ENCODE measurements at regions of chr6 and their contacts with region 1.

Region 1: DNA sequence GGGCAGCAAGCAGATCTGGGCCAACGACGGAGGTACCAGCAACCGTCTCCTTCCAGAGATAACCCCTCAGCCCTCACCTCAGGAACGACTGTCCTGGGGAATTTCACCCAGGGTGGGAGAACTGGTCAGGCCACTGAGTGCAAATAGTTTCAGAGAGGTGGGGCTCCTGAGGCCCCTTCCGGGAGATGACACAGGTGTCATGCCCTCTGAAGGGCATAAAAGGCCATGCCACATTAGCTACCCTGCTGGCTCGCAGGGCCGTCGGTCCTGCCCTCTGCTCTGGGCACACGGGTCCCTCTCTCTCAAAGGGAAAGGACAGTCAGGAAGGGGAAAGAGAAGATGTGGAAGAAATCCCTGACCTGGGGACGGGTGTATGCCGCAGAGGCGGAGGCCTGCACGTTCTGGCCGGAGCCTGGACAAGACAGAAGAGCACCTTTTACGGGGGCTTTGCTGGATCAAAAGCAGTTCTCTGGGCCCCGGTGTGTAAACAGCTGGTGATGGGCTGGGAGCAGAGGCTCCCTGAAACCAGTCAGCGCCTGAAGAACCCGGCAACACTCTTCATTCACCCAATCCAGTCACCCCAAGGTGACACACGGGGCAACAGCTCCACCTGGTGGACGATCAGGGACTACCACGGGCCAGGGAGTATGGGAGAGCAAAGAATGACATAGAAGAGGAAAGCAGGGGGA is 6.4 kb upstream of the TAF8 start:
- DNase-seq: peak; percentile 90
- H3K4me3 ChIP-seq: no peak overlapping the region
- H3K27ac ChIP-seq: no peak overlapping the region
- H3K4me1 ChIP-seq: peaks cover 32% of the 10 kb centered on the region
- H3K27me3 ChIP-seq: no peaks in the 10 kb centered on the region
- CTCF ChIP-seq: peak; percentile 95

Region 2: DNA sequence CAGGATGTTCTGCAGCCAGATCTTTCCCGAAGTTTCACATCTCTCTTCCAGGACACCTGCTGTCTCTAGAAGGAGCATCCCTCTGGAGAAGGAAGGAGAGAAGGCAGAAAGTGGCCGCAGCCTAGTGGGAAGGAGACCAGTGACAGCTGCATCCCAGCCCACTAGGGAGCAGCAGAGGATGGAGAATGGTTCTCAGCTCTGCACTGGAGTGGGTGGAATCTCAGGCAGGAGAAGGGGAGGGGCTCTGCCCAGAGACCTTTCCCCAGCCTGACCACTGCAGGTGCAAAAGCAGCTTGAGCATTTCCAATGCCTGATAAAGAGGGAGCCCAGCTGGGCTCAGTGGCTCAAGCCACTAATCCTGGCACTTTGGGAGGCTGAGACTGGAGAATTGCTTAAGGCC is 676.2 kb before region 1 on chr6:
- CTCF ChIA-PET with region 1: no interaction called
- POLR2A ChIA-PET with region 1: no interaction called
- intact Hi-C with region 1: loop called (anchors 1 kb)
- DNase-seq: peak; percentile 77
- H3K4me3 ChIP-seq: no peak overlapping the region
- H3K27ac ChIP-seq: no peak overlapping the region
- H3K4me1 ChIP-seq: peaks cover 11% of the 10 kb centered on the region
- H3K27me3 ChIP-seq: no peaks in the 10 kb centered on the region
- CTCF ChIP-seq: peak; percentile 82

Region 3: DNA sequence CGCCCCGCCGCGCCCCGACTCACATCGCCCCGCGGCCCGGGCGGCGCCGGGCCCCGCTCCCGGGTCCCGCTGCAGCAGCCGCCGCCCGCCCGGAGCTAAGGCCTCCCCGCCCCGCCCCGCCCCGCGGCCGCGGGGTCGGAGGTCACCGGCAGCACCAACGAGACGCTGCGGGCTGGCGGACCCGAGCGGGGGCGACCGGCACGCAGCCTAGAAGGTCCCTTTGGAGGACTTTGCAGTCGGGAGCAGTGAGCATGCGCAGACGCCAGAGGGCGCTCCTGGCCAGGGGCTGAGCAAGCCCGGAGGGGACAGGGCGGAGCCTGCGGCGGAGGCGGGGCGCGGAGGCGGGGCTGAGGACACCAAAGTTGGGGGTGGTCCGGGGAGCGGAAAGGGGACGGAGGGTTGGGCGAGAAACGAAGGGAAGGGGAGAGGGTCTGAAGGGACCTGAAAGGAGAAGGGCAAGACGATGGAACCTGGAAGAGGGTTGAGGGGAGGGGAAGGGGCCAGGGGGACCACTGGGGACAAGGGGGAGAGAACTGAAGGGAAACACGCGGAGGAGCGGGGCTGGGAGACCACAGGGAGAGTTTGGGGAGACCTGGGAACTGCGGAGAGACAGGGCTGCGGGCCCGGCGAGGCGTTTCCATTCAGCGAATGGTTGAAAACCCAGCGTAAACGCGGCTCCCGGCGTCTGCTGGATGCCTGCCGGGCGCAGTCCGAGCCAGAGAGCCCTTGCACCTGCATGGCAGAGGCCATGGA is 264.0 kb before region 1 on chr6 and contains the start of gene FRS3:
- CTCF ChIA-PET with region 1: interaction called, 3 read pairs
- POLR2A ChIA-PET with region 1: no interaction called
- intact Hi-C with region 1: loop called (anchors 2 kb)
- DNase-seq: peak; percentile 96
- H3K4me3 ChIP-seq: peak within 1 kb of the TSS; percentile 81
- H3K27ac ChIP-seq: peak within 1 kb of the TSS; percentile 53
- H3K4me1 ChIP-seq: peaks cover 17% of the 10 kb centered on the region
- H3K27me3 ChIP-seq: no peaks in the 10 kb centered on the region
- CTCF ChIP-seq: peak; percentile 95
- total RNA-seq, gene FRS3: 3.0 and 5.5 TPM in 2 replicates

Region 4: DNA sequence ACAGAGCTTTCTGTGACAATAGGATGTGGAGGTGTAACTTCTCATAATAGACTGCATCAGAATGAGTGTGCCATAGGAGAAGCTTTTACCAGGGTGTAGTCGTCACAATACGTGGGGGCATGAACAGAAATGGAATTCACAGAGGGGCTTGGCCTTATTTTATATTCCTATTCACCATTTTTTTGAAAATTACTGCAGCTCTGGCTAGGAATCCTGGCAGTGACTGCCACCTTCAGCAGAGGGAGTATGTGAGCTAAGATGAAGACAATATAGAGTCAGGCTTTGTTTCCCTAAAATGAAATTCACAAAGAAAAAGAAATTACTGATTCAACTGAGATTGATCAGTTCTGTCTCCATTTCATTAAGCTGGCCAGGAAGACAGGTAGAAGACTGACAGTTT is 242.6 kb before region 1 on chr6:
- CTCF ChIA-PET with region 1: no interaction called
- POLR2A ChIA-PET with region 1: no interaction called
- intact Hi-C with region 1: loop called (anchors 1 kb)
- DNase-seq: no peak
- H3K4me3 ChIP-seq: no peak overlapping the region
- H3K27ac ChIP-seq: no peak overlapping the region
- H3K4me1 ChIP-seq: no peaks in the 10 kb centered on the region
- H3K27me3 ChIP-seq: no peaks in the 10 kb centered on the region
- CTCF ChIP-seq: peak; percentile 49

Region 5: GRCh38 chr6:41941280-41942066 is 102.5 kb before region 1 on chr6 and contains the start of gene CCND3:
- CTCF ChIA-PET with region 1: no interaction called
- POLR2A ChIA-PET with region 1: no interaction called
- intact Hi-C with region 1: loop called (anchors 2 kb)
- DNase-seq: peak; percentile 94
- H3K4me3 ChIP-seq: peak within 1 kb of the TSS; percentile 74
- H3K27ac ChIP-seq: peak within 1 kb of the TSS; percentile 62
- H3K4me1 ChIP-seq: peaks cover 27% of the 10 kb centered on the region
- H3K27me3 ChIP-seq: no peaks in the 10 kb centered on the region
- CTCF ChIP-seq: no peak
- total RNA-seq, gene CCND3: 31.9 and 39.9 TPM in 2 replicates

Measured in A673 (cell line).